Right cardiac atrium (tissue), 5 donors: ENCODE measurements at regions of chr18 and their contacts with region 1.

Region 1: DNA sequence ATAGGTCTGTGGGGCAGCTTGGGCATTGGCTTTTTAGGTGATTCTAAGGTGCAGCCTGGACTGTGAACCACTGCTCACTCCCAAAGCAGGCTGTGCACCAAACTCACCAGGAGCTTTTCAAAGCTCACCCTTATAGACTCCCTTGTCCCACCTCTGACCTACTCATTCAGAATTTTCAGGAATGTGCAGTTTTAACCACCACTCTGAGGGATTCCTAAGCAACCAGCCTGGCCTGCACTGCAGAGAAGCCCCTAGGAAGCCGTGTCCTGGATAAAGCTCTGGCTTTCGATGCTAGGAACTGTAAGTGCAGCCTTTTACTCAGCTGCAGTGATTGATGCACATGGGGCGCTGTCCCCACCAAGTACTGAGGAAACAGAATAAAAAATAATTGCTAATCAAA is 33.0 kb downstream of the MRO start:
- DNase-seq: no peak
- ATAC-seq: no peak
- H3K4me3 ChIP-seq: no peak overlapping the region
- H3K27ac ChIP-seq: no peak overlapping the region
- H3K4me1 ChIP-seq: peaks cover 3% of the 10 kb centered on the region
- H3K27me3 ChIP-seq: no peaks in the 10 kb centered on the region

Region 2: GRCh38 chr18:50507120-50507590 is 279.7 kb before region 1 on chr18:
- intact Hi-C with region 1: loop called (anchors 2 to 5 kb)
- DNase-seq: peak; percentile 47 to 75 (median 63)
- ATAC-seq: peak; percentile 75 to 78
- H3K4me3 ChIP-seq: no peak overlapping the region
- H3K27ac ChIP-seq: no peak overlapping the region
- H3K4me1 ChIP-seq: no peaks in the 10 kb centered on the region
- H3K27me3 ChIP-seq: no peaks in the 10 kb centered on the region

Region 3: DNA sequence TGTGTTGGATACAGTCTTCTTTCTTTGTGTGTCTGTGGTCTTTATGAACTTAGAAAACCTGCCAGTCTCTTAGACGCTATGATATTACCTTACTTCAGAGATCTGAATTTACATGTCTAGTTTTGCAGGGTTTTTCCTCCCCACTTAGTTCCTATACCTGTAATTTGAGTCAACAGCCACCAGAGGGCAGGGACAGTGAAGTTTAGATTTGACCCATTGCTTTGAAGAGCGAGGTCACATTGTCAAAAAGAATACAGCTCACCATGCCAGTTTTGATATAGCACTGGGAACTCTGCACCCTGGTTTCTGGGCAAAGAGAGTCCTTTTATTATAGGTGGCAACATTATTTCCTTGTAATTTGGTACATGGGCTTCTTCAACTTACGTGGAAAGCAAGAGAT is 124.7 kb before region 1 on chr18:
- intact Hi-C with region 1: loop called in 2 of 4 experiments (anchors 5 to 10 kb)
- DNase-seq: no peak
- ATAC-seq: no peak
- H3K4me3 ChIP-seq: no peak overlapping the region
- H3K27ac ChIP-seq: no peak overlapping the region
- H3K4me1 ChIP-seq: peaks cover 10% of the 10 kb centered on the region
- H3K27me3 ChIP-seq: no peaks in the 10 kb centered on the region

Region 4: DNA sequence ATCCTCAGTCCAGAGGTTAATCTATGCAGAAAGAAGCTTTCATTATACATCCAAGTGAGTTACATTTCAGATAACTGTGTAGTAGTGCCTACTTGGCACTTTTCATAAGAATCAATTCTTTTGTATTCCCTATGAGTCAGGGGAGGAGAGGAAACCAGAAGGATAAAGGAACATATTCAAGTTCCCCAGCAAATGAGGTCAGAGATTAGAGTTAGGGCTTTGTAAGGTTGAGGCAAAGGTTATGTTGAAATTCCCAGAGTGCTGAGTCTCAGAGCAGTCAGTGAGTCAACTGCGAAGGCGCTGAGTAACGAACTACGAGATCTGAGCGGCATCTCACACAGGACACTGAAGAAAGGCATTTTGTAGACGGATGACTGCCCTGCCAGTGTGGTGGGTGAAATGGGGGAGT is 67.0 kb after region 1 on chr18:
- intact Hi-C with region 1: no loop called
- DNase-seq: peak in 2 of 3 donors; percentile 28 to 50
- ATAC-seq: peak; percentile 66 to 69
- H3K4me3 ChIP-seq: no peak overlapping the region
- H3K27ac ChIP-seq: no peak overlapping the region
- H3K4me1 ChIP-seq: no peaks in the 10 kb centered on the region
- H3K27me3 ChIP-seq: no peaks in the 10 kb centered on the region

Region 5: GRCh38 chr18:51029694-51030536 is 243.1 kb after region 1 on chr18 and contains the start of gene SMAD4:
- intact Hi-C with region 1: no loop called
- DNase-seq: peak; percentile 96 to 99 (median 98)
- ATAC-seq: peak; percentile 97 to 98
- H3K4me3 ChIP-seq: peak within 1 kb of the TSS; percentile 84
- H3K27ac ChIP-seq: peak within 1 kb of the TSS; percentile 99
- H3K4me1 ChIP-seq: peaks cover 6% of the 10 kb centered on the region
- H3K27me3 ChIP-seq: no peaks in the 10 kb centered on the region
- total RNA-seq, gene SMAD4: 85.8 to 98.2 (median 92.7) TPM

Region 6: GRCh38 chr18:52140986-52141385 is 1354.1 kb after region 1 on chr18:
- intact Hi-C with region 1: no loop called
- DNase-seq: no peak
- ATAC-seq: no peak
- H3K4me3 ChIP-seq: no peak overlapping the region
- H3K27ac ChIP-seq: no peak overlapping the region
- H3K4me1 ChIP-seq: no peaks in the 10 kb centered on the region
- H3K27me3 ChIP-seq: no peaks in the 10 kb centered on the region